Activated CD4-positive, alpha-beta memory T cell treated with anti-CD3 and anti-CD28 coated beads for 36 hours (primary cell): ENCODE measurements at regions of chr1 and their contacts with region 1.

Region 1: DNA sequence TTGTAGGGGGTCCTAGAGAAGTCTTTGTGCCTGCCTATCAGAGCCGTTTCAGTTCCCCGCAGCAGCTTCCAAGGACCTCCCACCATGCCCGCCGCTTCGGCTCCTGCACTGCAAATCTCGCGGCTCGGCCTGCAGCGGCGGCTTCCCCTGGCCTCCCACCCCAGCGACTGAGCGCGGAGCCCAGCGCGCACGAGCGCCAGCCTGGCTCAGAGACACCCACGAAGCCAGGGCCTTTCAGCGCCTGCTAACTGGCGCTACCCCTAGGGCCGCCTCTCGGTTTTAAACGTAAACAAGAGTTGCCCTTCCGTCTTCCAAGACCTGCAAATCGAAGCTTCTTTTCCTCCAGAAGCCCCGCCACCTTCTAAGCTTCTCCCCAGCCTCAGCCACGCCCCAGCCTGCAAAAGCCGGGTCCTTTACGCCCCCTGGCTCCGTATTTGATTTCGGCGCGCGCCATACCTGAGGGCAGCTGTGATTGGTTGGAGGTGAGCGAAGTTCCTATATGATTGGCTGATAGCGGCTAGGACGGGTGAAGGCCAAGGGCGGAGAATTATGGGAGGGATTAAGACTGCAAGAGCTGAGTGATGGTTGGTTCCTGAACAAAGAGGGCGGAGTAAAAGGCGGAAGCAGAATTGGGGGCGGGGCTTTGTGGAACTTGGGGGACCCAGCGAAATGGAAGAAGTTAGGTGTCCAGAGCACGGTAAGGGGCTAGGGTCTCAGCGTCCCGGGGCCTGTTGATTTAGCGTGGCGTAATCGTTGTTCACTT is at the start of gene TTF2:
- DNase-seq: peak; percentile 98
- H3K4me3 Mint-ChIP-seq: no peak within 1 kb of the TSS
- H3K27ac Mint-ChIP-seq: no peak within 1 kb of the TSS
- H3K4me1 Mint-ChIP-seq: peaks cover 40% of the 10 kb centered on the region
- H3K27me3 Mint-ChIP-seq: no peaks in the 10 kb centered on the region
- total RNA-seq, gene TTF2: 102 to 104 TPM

Region 2: GRCh38 chr1:116377541-116378529 is 682.0 kb before region 1 on chr1:
- CTCF ChIA-PET with region 1: no interaction called
- POLR2A ChIA-PET with region 1: no interaction called
- intact Hi-C with region 1: loop called (anchors 5 kb)
- DNase-seq: peak; percentile 55
- H3K4me3 Mint-ChIP-seq: peak overlapping the region; percentile 69
- H3K27ac Mint-ChIP-seq: peak overlapping the region; percentile 83
- H3K4me1 Mint-ChIP-seq: peaks cover 77% of the 10 kb centered on the region
- H3K27me3 Mint-ChIP-seq: no peaks in the 10 kb centered on the region

Region 3: GRCh38 chr1:116724765-116725375 is 335.0 kb before region 1 on chr1:
- CTCF ChIA-PET with region 1: interaction called, 28 read pairs
- POLR2A ChIA-PET with region 1: interaction called, 5 read pairs
- intact Hi-C with region 1: loop called (anchors 1 kb)
- DNase-seq: peak; percentile 84
- H3K4me3 Mint-ChIP-seq: no peak overlapping the region
- H3K27ac Mint-ChIP-seq: peak overlapping the region; percentile 64
- H3K4me1 Mint-ChIP-seq: peaks cover 28% of the 10 kb centered on the region
- H3K27me3 Mint-ChIP-seq: no peaks in the 10 kb centered on the region

Region 4: DNA sequence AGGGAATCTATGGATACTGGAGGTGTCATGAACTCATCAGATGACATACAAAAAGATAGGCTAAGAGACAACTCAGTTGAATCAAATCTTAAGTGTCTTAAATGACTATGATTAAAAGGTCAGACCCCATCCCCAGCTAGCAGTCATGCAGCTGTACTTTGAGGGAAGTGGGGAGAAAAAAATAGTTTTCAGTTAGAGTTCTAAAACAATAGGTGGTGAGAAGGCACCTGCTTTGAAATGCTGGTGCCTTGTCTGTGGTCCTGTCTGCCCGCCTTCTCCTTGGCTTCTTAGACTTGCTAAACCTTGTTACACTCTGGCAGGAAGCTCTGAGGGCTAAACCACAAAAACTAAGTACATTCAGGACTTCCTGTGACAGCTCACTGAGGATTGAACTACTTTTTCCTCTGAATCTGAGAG is 290.3 kb before region 1 on chr1:
- CTCF ChIA-PET with region 1: interaction called, 11 read pairs
- POLR2A ChIA-PET with region 1: interaction called, 94 read pairs
- intact Hi-C with region 1: loop called (anchors 2 kb)
- DNase-seq: peak; percentile 85
- H3K4me3 Mint-ChIP-seq: peak overlapping the region; percentile 99
- H3K27ac Mint-ChIP-seq: peak overlapping the region; percentile 99
- H3K4me1 Mint-ChIP-seq: peaks cover 95% of the 10 kb centered on the region
- H3K27me3 Mint-ChIP-seq: peaks cover 2% of the 10 kb centered on the region

Region 5: GRCh38 chr1:116781034-116781433 is 278.8 kb before region 1 on chr1:
- CTCF ChIA-PET with region 1: no interaction called
- POLR2A ChIA-PET with region 1: no interaction called
- intact Hi-C with region 1: no loop called
- DNase-seq: no peak
- H3K4me3 Mint-ChIP-seq: no peak overlapping the region
- H3K27ac Mint-ChIP-seq: peak overlapping the region; percentile 25
- H3K4me1 Mint-ChIP-seq: peaks cover 39% of the 10 kb centered on the region
- H3K27me3 Mint-ChIP-seq: no peaks in the 10 kb centered on the region

Region 6: GRCh38 chr1:116987256-116987555 is 72.7 kb before region 1 on chr1:
- CTCF ChIA-PET with region 1: no interaction called
- POLR2A ChIA-PET with region 1: interaction called, 11 read pairs
- intact Hi-C with region 1: no loop called
- DNase-seq: peak; percentile 78
- H3K4me3 Mint-ChIP-seq: peak overlapping the region; percentile 76
- H3K27ac Mint-ChIP-seq: peak overlapping the region; percentile 90
- H3K4me1 Mint-ChIP-seq: peaks cover 28% of the 10 kb centered on the region
- H3K27me3 Mint-ChIP-seq: no peaks in the 10 kb centered on the region

Region 7: GRCh38 chr1:117128323-117129079 is 68.6 kb after region 1 on chr1:
- CTCF ChIA-PET with region 1: interaction called, 150 read pairs
- POLR2A ChIA-PET with region 1: no interaction called
- intact Hi-C with region 1: loop called (anchors 2 kb)
- DNase-seq: no peak
- H3K4me3 Mint-ChIP-seq: no peak overlapping the region
- H3K27ac Mint-ChIP-seq: no peak overlapping the region
- H3K4me1 Mint-ChIP-seq: no peaks in the 10 kb centered on the region
- H3K27me3 Mint-ChIP-seq: peaks cover 10% of the 10 kb centered on the region

Region 8: GRCh38 chr1:117664314-117664713 is 604.5 kb after region 1 on chr1:
- CTCF ChIA-PET with region 1: no interaction called
- POLR2A ChIA-PET with region 1: no interaction called
- intact Hi-C with region 1: loop called (anchors 5 kb)
- DNase-seq: peak; percentile 76
- H3K4me3 Mint-ChIP-seq: no peak overlapping the region
- H3K27ac Mint-ChIP-seq: peak overlapping the region; percentile 68
- H3K4me1 Mint-ChIP-seq: peaks cover 78% of the 10 kb centered on the region
- H3K27me3 Mint-ChIP-seq: no peaks in the 10 kb centered on the region